ENCODE measurements at regions of chr19 and their contacts with region 1.

Region 1: DNA sequence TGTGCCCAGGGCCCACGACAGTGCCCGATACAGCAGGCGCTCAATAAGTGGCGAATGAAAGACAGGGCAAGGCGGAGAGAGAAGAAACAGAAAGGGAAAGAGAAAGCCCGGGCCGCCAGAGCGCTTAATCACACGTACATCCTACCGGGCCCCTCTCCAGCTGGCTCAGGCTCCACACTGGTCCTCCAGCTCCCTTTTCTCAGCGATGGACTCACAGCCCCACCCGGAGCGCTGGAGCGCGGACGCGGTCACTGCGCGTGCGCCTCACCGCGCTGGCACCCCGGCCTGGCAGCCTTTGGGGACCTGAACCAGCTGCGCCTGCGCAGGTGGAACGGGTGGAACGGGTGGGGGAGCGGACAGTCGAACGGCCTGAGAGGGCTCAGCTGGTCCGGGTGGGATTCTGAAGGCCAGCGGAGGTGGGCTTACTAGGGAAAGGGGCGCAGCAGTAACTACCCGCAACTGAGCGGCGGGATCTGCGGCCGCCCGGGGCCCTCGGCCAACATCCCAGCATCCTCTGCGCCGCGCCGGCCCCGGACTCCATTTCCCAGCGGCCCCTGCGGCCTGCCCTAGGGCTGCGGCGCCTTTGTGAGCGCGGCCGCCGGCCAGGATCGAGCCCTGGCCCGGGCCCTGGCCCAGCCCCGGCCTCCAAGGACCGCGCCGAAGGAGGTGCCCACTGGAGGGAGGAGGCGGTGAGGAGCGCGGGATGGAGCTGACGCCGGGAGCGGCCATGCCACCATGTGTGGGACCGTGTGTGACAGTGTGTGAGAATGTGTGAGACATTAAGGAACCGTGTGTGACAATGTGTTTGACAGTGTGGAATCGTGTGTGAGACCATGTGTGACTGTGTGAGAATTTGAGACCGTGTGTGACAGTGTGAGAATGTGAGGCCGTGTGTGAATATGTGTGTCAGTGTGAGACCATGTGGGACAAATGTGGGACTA is at the start of gene ZNF583:
- DNase-seq: peak; percentile 98 to 99
- ATAC-seq: peak; percentile 99
- H3K4me3 ChIP-seq: peak within 1 kb of the TSS; percentile 50 to 69
- H3K27ac ChIP-seq: peak within 1 kb of the TSS in 1 of 2 donors; percentile 38
- H3K4me1 ChIP-seq: no peaks in the 10 kb centered on the region
- H3K27me3 ChIP-seq: no peaks in the 10 kb centered on the region
- total RNA-seq, gene ZNF583: 6.2 to 9.4 TPM

Region 2: DNA sequence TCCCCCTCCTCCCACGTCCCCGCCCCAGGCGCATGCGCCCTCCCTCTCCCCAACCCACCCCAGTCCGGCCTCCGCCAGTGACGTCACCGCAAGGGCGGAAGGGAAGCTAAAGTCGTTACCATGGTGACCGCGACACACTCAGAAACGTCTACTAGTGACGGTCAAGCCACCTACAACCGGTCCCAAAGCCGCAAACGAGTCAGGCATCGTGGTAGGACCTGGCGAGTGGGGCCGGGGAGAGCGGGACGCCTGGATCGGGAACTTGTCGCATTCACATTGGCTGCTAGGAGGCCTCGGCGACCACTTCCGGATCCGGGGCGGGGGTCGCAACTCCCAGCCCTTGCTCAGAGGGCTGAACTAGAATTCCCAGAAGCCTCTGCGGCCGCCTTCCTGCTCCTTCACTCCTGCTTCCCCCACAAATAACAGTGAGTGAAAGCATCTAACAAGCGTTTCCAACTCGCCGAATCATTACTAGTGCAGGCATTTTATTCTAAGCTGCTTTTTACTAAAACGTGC is 89.4 kb before region 1 on chr19 and contains the start of gene ZSCAN5A:
- intact Hi-C with region 1: no loop called
- DNase-seq: peak; percentile 99
- ATAC-seq: peak; percentile 96
- H3K4me3 ChIP-seq: peak within 1 kb of the TSS; percentile 64 to 67
- H3K27ac ChIP-seq: peak within 1 kb of the TSS in 1 of 2 donors; percentile 98
- H3K4me1 ChIP-seq: no peaks in the 10 kb centered on the region
- H3K27me3 ChIP-seq: no peaks in the 10 kb centered on the region
- total RNA-seq, gene ZSCAN5A: 10.2 to 13.8 TPM

Region 3: DNA sequence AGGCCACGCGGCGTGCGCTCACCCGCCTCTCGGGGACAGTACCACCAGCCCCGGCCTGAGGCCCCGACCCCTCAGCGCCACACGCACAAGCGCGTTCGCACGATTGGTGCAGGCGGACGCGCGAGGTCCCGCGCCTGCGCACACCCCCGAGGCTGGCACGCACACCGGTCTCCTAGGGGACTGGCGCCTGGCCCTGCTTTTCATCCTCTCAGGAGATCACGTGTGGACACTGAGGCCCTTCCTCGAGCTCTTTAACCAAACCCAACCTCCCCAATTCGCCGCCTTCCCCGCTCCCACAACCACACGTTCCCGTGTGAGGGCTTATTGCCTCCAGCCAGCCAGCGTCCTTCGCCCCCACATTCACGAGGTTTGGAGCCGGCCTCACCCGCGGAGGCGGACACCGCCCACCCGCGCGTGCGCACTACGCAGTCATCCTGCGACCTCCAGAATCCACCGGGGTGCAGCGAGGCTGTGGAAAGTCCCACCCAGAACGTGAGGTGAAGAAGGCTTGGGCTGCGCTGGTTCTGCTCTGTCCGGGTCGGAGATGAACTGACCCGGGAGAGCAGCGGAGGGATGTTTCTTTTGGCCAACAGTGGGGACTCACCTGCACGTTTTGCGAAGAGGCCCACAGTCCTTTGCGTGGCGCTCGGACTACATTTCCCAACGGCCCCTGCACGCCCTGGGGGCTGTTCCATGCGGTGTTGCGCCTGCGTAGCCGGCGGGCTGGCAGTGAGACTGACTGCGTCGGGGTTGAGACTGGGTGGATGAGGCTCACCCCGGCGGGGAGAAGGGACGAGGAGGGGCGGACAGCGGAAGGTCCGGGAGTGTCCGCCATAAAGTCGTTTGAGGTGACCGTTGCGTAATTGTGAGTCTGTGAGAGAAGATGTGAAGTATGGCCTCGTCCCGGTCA is 73.7 kb after region 1 on chr19:
- intact Hi-C with region 1: loop called in 1 of 2 experiments (anchors 5 kb)
- DNase-seq: peak; percentile 94 to 97
- ATAC-seq: peak; percentile 96
- H3K4me3 ChIP-seq: peak overlapping the region; percentile 49 to 54
- H3K27ac ChIP-seq: no peak overlapping the region
- H3K4me1 ChIP-seq: peaks cover 0 to 3% of the 10 kb centered on the region in 2 donors
- H3K27me3 ChIP-seq: no peaks in the 10 kb centered on the region

Region 4: GRCh38 chr19:56507446-56508289 is 103.6 kb after region 1 on chr19 and contains the start of gene ZNF471:
- intact Hi-C with region 1: no loop called
- DNase-seq: peak; percentile 99 to 100
- ATAC-seq: peak; percentile 100
- H3K4me3 ChIP-seq: peak within 1 kb of the TSS; percentile 42 to 70
- H3K27ac ChIP-seq: peak within 1 kb of the TSS in 1 of 2 donors; percentile 95
- H3K4me1 ChIP-seq: no peaks in the 10 kb centered on the region
- H3K27me3 ChIP-seq: no peaks in the 10 kb centered on the region
- total RNA-seq, gene ZNF471: 11.0 to 12.1 TPM